ENCODE measurements at regions of chr16 and their contacts with region 1.

Region 1: GRCh38 chr16:4330277-4330874 is 14.5 kb downstream of the GLIS2 start:
- DNase-seq: peak; percentile 90
- ATAC-seq: peak; percentile 77

Region 2: GRCh38 chr16:4288148-4288921 is 42.0 kb before region 1 on chr16:
- intact Hi-C with region 1: loop called (anchors 2 kb)
- DNase-seq: peak; percentile 86
- ATAC-seq: peak; percentile 86

Region 3: GRCh38 chr16:4307215-4308037 is 22.9 kb before region 1 on chr16:
- intact Hi-C with region 1: loop called (anchors 2 kb)
- DNase-seq: peak; percentile 98
- ATAC-seq: peak; percentile 98